Posterior vena cava (tissue), 2 donors: ENCODE measurements at regions of chr4 and their contacts with region 1.

Region 1: GRCh38 chr4:99683895-99684294 is 26.3 kb upstream of the C4orf54 start:
- DNase-seq: no peak

Region 2: GRCh38 chr4:99734583-99735322 is 50.9 kb after region 1 on chr4:
- intact Hi-C with region 1: loop called in 1 of 2 experiments (anchors 1 kb)
- DNase-seq: no peak